Mucosa of descending colon (tissue), 3 donors: ENCODE measurements at regions of chr18 and their contacts with region 1.

Region 1: GRCh38 chr18:7177116-7177744 is 53.7 kb upstream of the LRRC30 start:
- DNase-seq: peak in 1 of 3 donors; percentile 38
- ATAC-seq: peak; percentile 52
- H3K4me3 ChIP-seq: no peak overlapping the region
- H3K4me1 ChIP-seq: no peaks in the 10 kb centered on the region
- CTCF ChIP-seq: peak; percentile 9

Region 2: GRCh38 chr18:6543330-6543908 is 633.8 kb before region 1 on chr18:
- intact Hi-C with region 1: loop called in 1 of 2 experiments (anchors 10 kb)
- DNase-seq: no peak
- ATAC-seq: no peak
- H3K4me3 ChIP-seq: no peak overlapping the region
- H3K4me1 ChIP-seq: no peaks in the 10 kb centered on the region
- CTCF ChIP-seq: no peak

Region 3: GRCh38 chr18:6920099-6920899 is 256.9 kb before region 1 on chr18:
- intact Hi-C with region 1: loop called in 1 of 2 experiments (anchors 10 kb)
- DNase-seq: peak in 1 of 3 donors; percentile 93
- ATAC-seq: peak; percentile 86
- H3K4me3 ChIP-seq: no peak overlapping the region
- H3K4me1 ChIP-seq: no peaks in the 10 kb centered on the region
- CTCF ChIP-seq: peak; percentile 42

Region 4: GRCh38 chr18:7038330-7038851 is 138.8 kb before region 1 on chr18:
- intact Hi-C with region 1: loop called in 1 of 2 experiments (anchors 10 kb)
- DNase-seq: peak in 2 of 3 donors; percentile 56 to 65
- ATAC-seq: peak; percentile 84
- H3K4me3 ChIP-seq: no peak overlapping the region
- H3K4me1 ChIP-seq: peaks cover 5% of the 10 kb centered on the region
- CTCF ChIP-seq: no peak

Region 5: GRCh38 chr18:7784171-7784570 is 606.9 kb after region 1 on chr18:
- intact Hi-C with region 1: no loop called
- DNase-seq: no peak
- ATAC-seq: no peak
- H3K4me3 ChIP-seq: no peak overlapping the region
- H3K4me1 ChIP-seq: no peaks in the 10 kb centered on the region
- CTCF ChIP-seq: no peak